ENCODE measurements at regions of chr5 and their contacts with region 1.

Region 1: DNA sequence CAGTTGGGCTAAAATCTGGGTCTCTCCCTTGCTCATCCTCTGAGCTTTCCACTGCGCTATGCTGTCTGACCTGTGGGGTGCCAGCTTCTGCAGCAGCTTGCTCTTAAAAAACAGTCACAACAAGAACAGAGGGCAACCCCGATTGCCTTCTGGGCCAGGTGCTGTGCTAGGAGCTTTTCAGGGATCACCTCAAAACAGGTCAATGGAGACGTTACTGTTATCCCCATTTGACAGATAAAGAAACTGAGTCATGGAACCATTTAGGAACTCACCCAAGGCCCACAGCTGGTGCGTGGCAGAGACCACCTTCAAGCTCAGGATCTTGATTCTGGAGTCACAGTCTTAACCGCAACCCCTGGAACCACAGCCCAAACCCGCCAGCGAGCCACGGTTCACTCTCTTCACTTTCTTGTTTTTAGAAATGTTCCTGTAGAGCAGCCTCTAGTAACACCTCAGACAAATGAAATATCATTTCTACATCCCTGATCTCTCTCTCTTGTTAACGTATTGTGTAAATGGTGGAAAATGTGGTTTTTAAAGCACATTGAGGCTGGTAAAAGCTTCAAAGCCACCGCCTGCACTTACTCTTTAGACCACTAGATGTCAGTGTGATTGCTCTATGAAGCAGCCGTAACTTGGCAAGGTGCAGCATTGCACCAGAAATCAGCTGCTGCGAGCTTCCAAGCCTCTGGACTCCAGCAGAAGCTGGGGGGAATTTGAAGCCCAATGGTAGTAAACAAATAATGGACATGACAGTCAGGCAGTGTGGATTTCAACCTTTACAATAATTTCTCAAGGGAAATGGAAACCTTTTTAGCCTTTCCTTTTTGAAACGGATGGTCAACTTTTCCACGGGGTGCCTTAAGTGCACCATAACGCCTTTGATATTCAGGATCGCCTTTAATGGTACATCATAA is 1.7 kb downstream of the FYB1 start:
- DNase-seq: peak; percentile 53 to 90 (median 82)
- ATAC-seq: peak; percentile 72 to 73
- H3K4me3 Mint-ChIP-seq: peak overlapping the region; percentile 77 to 95 (median 84)
- H3K27ac Mint-ChIP-seq: peak overlapping the region; percentile 68 to 97 (median 92)
- H3K4me1 Mint-ChIP-seq: peaks cover 41 to 75% (median 61%) of the 10 kb centered on the region in 4 donors
- H3K27me3 Mint-ChIP-seq: no peaks in the 10 kb centered on the region

Region 2: DNA sequence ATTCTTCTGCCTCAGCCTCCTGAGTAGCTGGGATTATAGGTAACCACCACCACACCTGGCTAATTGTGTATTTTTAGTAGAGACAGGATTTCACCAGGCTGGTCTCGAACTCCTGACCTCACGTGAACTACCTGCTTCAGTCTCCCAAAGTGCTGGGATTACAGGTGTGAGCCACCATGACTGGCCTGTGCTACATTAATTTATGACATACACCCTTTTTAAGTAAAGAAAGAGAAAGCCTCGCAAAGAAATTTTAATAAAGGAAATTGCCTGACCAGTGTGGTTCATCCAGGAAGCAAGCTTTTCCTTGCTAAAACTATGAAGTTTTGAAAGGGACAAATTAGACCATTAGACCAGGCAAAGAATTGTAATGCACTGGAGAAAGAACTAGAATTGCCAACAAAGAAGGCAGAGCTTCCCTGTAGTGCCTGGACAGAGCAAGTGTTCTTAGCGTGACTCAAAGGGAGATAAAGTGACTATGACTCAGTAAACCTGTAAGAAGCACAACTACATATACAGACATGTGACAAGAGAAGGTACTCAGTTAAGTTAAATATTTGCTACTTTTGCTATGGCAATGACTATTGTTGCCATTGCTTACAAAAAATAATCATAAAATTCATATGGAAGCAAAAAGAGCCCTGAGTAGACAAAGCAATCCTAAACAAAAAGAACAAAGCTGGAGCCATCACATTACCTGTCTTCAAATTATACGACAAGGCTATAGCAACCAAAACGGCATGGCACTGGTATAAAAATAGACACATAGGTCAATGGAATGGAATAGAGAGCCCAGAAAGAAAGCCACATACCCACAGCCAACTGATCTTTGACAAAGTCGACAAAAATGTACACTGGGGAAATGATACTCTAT is 52.9 kb before region 1 on chr5:
- POLR2A ChIA-PET with region 1: interaction called, 15 read pairs
- DNase-seq: no peak
- ATAC-seq: peak; percentile 53 to 66
- H3K4me3 Mint-ChIP-seq: peak overlapping the region; percentile 48 to 81 (median 73)
- H3K27ac Mint-ChIP-seq: peak overlapping the region; percentile 85 to 95 (median 92)
- H3K4me1 Mint-ChIP-seq: peaks cover 46 to 92% (median 87%) of the 10 kb centered on the region in 4 donors
- H3K27me3 Mint-ChIP-seq: no peaks in the 10 kb centered on the region

Region 3: DNA sequence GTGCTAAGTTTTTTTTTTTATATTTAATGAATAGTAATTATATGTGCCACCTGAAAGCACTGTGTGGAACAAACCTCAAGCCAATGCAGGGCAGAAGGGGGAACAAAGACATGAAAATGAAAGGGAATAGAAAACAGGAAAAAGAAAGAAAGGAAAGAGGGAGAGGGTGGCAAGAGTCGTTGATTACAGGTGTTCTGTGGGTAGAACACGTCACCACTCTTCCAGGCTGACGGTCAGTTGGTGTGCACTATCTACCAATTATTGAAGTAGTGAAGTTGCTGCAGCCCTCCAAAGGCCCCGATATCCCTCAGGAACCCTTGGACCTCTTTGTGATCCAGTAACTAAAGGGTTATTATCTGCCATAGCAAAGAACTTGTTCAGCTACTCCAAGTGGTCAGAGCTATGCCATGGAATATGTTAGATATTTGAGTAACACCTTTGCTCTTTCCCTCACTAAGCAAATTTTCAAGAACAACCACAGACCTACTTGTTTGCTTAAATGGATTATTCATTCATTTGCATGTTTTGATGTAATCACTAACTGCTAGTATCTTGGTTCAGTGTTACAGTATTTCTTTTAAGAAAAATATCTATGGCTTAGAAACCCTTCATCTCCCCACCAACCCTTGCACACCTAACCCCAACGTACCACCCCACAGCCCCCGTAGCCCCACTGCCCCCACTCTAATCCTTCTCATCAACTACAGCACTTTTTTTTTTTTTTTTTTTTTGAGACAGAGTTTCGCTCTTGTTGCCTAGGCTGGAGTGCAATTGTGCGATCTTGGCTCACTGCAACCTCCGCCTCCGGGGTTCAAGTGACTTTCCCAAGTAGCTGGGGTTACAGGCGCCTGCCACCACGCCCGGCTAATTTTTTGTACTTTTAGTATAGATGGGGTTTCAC is 29.5 kb before region 1 on chr5:
- POLR2A ChIA-PET with region 1: interaction called, 78 read pairs
- DNase-seq: peak in 4 of 10 donors; percentile 32 to 64 (median 56)
- ATAC-seq: peak; percentile 30 to 36
- H3K4me3 Mint-ChIP-seq: peak overlapping the region; percentile 75 to 94 (median 88)
- H3K27ac Mint-ChIP-seq: peak overlapping the region; percentile 94 to 100 (median 96)
- H3K4me1 Mint-ChIP-seq: peaks cover 30 to 95% (median 90%) of the 10 kb centered on the region in 4 donors
- H3K27me3 Mint-ChIP-seq: no peaks in the 10 kb centered on the region

Region 4: DNA sequence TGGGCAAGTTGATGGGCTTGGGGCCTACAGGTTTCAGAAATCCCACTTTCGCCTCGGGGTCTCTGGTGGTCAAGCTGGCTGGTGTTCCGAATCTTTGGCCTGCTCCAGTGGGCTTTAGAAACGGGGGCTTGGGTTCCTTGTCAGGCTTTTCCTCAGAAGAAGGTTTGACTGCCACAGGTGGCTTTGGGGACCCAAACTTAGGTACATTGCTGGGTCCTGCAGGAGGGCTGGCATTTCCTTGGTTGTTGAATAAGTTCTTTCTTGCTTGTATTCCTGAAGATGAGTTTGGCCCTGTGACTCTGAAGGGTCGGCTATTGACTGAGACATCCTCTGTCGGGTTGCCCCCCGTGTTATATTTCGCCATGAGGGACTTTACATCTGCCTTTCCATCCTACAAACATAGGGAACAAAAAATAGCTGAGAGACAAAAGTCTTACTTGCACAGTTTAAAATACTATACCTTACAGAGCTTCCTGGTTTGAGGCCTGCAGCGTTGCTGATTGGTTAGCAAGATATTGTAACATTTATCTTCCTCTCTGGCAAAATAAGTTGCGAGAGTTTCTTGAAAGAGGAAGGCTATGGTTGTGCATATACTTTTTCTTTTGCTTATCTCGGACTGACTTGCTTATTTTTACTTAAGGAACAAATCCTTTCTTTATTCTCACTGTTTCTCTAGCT is 14.9 kb before region 1 on chr5:
- POLR2A ChIA-PET with region 1: interaction called, 124 read pairs
- DNase-seq: peak in 4 of 10 donors; percentile 39 to 72 (median 64)
- ATAC-seq: peak; percentile 67 to 68
- H3K4me3 Mint-ChIP-seq: peak overlapping the region; percentile 84 to 99 (median 96)
- H3K27ac Mint-ChIP-seq: peak overlapping the region; percentile 93 to 100 (median 96)
- H3K4me1 Mint-ChIP-seq: peaks cover 24 to 70% (median 44%) of the 10 kb centered on the region in 4 donors
- H3K27me3 Mint-ChIP-seq: peaks cover 0 to 1% (median 0%) of the 10 kb centered on the region in 5 donors

Region 5: GRCh38 chr5:39283231-39283818 is 65.7 kb after region 1 on chr5:
- POLR2A ChIA-PET with region 1: interaction called, 29 read pairs
- DNase-seq: peak; percentile 8 to 82 (median 68)
- ATAC-seq: peak; percentile 100
- H3K4me3 Mint-ChIP-seq: peak overlapping the region in 8 of 10 donors; percentile 1 to 70 (median 35)
- H3K27ac Mint-ChIP-seq: peak overlapping the region in 9 of 10 donors; percentile 13 to 94 (median 79)
- H3K4me1 Mint-ChIP-seq: peaks cover 16 to 41% (median 34%) of the 10 kb centered on the region in 4 donors
- H3K27me3 Mint-ChIP-seq: peaks cover 1 to 10% (median 4%) of the 10 kb centered on the region in 5 donors